Activated CD4-positive, alpha-beta memory T cell treated with anti-CD3 and anti-CD28 coated beads for 36 hours (primary cell): ENCODE measurements at regions of chr19 and their contacts with region 1.

Region 1: DNA sequence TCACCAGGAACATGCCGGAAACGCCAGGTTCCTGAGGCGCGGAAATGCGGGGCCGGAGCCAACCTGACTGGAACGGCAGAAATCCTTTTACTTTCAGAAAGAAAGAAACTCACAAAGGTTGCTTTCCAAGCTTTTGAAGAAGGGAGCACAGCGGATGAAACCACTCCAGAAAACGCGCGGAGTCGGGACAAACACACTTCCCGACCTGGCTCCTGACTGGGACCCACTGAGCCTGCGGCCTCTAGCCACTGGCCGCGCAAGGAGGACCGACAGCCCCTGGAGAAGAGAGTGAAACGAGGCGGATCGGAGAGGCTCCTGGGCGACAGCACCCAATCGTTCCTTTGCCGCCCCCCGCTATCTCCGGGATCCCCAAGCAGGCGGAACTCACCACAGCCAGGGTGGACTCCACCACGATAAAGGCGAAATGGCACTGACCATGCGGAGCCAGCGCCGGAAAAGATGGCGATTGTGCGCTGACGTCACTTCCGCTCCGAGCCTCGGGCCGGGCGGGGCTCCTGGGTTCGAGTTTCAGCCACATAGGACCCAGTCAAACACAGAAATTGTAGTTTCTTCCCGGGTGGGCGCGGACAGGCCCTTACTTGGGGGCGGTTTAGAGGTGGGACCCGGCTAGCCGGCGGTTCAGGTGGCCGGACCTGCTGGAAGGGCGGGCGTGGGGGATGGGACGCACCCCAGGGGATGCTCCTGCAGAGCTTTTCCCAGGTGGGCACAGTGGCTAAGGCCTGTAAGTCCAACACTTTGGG is at the start of gene ZNF121:
- DNase-seq: peak; percentile 90
- H3K4me3 Mint-ChIP-seq: peak within 1 kb of the TSS; percentile 93
- H3K27ac Mint-ChIP-seq: peak within 1 kb of the TSS; percentile 93
- H3K4me1 Mint-ChIP-seq: peaks cover 31% of the 10 kb centered on the region
- H3K27me3 Mint-ChIP-seq: peaks cover 6% of the 10 kb centered on the region
- total RNA-seq, gene ZNF121: 61.1 to 62.2 TPM

Region 2: GRCh38 chr19:9205501-9206113 is 378.6 kb before region 1 on chr19:
- CTCF ChIA-PET with region 1: no interaction called
- POLR2A ChIA-PET with region 1: no interaction called
- intact Hi-C with region 1: loop called (anchors 2 kb)
- DNase-seq: peak; percentile 76
- H3K4me3 Mint-ChIP-seq: peak overlapping the region; percentile 23
- H3K27ac Mint-ChIP-seq: no peak overlapping the region
- H3K4me1 Mint-ChIP-seq: peaks cover 2% of the 10 kb centered on the region
- H3K27me3 Mint-ChIP-seq: peaks cover 4% of the 10 kb centered on the region

Region 3: DNA sequence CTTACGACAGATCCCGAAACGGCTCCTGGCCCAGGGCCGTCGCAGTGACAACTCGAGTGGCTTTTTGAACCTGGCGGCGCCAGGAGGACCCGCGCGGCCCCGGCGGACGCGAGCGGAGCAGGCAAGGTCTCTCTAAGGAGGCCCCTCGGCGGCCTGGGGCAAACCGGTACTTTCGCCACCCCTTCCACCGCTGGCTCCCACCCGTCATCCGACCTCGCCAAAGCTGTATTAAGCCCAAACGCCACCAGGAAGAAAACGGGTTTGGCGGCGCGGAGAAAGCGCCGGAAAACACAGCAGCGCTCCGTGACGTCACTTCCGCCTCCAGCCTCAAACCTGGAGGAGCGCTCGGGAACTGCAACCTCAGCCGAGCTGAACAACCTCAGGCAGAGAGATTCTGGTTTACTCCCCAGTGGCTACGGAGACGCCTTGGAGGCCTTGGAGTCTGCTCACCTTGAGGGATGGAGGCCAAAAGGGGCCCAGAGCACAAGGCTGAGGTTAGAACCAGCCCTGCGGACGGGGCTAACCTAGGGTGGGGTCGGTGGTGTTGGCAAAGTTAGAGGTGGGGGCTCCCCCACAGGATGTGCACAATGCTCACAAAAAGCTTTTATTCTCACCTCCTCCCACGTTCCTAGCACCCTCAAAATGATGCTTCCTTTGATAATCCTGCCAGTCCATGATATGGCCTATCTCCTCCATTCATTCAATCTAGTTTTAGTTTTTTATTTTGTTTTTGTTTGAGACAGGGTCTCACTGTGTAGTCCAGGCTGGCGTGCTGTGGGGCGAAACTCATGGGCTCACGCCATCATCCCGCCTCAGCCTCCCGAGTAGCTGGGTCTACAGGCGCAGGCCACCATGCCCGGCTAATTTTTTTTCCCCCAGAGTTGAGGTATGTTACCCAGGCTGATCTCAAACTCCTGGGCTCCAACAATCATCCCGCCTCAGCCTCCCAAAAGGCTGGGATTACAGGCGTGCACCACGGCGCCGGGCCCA is 148.7 kb before region 1 on chr19 and contains the start of gene ZNF266:
- CTCF ChIA-PET with region 1: interaction called, 3 read pairs
- POLR2A ChIA-PET with region 1: interaction called, 7 read pairs
- intact Hi-C with region 1: loop called (anchors 5 kb)
- DNase-seq: peak; percentile 96
- H3K4me3 Mint-ChIP-seq: peak within 1 kb of the TSS; percentile 94
- H3K27ac Mint-ChIP-seq: peak within 1 kb of the TSS; percentile 98
- H3K4me1 Mint-ChIP-seq: peaks cover 33% of the 10 kb centered on the region
- H3K27me3 Mint-ChIP-seq: no peaks in the 10 kb centered on the region
- total RNA-seq, gene ZNF266: 20.0 to 23.4 TPM

Region 4: DNA sequence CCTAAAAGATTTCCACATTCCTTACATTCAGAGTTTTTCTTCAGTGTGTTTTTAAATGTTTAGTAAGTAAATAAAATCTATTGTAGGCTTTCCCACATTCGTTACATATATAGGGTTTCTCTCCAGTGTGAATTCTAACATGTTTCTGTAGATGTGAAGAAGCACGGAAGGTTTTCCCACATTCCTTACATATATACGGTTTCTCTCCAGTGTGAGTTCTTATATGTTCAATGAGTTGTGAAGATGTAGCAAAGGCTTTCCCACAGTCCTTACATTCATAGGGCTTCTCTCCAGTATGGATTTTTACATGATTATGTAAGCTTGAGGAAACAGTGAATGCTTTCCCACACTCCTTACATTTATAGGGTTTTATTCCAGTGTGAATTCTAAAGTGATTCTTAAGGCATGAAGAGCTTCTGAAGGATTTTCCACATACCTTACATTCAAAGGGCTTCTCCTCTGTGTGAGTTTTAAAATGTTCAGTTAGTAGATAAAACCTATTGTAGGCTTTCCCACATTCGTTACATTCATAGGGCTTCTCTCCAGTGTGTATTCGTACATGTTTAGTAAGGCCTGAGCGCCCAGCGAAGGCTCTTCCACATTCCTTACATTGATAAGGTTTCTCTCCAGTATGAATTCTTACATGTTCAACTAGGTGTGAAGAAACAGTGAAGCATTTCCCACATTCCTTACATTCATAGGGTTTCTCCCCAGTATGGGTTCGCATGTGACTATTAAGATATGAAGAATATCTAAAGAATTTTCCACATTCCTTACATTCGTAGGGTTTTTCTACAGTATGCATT is 18.1 kb before region 1 on chr19:
- CTCF ChIA-PET with region 1: no interaction called
- POLR2A ChIA-PET with region 1: no interaction called
- intact Hi-C with region 1: no loop called
- DNase-seq: no peak
- H3K4me3 Mint-ChIP-seq: no peak overlapping the region
- H3K27ac Mint-ChIP-seq: peak overlapping the region; percentile 36
- H3K4me1 Mint-ChIP-seq: no peaks in the 10 kb centered on the region
- H3K27me3 Mint-ChIP-seq: no peaks in the 10 kb centered on the region

Region 5: DNA sequence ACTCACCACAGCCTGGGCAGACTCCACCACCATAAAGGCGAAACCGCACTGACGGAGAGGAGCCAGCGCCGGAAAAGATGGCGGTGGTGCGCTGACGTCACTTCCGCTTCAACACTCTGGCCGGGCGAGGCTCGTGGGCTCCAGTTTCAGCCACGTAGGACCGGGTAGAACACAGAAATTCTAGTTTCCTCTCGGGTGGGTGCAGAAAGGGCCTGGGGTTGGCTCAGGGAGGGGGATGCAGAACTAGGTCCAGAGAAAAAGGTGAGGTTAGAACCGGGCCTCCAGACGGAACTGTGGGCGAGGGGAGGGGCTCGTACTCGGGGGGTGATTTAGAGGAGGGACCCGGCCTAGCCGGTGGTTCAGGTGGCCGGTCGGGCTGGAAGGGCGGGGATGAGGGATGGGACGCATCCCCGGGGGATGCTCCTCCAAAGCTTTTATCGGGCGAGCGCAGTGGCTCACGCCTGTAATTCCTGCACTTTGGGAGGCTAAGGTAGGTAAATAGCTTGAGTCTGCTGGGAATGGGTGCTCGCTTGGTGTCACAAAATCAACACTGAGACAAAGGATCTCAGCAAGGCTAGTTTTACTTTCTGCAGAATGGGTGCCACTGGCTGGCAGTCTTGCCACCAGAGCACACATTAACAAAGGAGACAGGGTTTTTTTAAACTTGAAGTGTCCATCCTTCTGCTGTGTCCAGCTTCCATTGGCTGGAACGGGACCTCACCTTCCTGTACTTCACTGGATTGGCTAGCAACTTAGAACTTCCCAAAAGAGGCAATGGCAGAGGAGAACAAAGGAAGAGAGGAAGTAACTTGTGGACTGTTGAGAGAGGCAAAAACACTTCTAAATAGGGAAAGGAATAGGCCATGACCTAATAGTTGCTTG is 37.1 kb after region 1 on chr19 and contains the start of gene ZNF561:
- CTCF ChIA-PET with region 1: interaction called, 5 read pairs
- POLR2A ChIA-PET with region 1: interaction called, 5 read pairs
- intact Hi-C with region 1: loop called (anchors 2 kb)
- DNase-seq: peak; percentile 91
- H3K4me3 Mint-ChIP-seq: peak within 1 kb of the TSS; percentile 92
- H3K27ac Mint-ChIP-seq: peak within 1 kb of the TSS; percentile 99
- H3K4me1 Mint-ChIP-seq: peaks cover 22% of the 10 kb centered on the region
- H3K27me3 Mint-ChIP-seq: no peaks in the 10 kb centered on the region
- total RNA-seq, gene ZNF561: 24.7 to 25.5 TPM

Region 6: DNA sequence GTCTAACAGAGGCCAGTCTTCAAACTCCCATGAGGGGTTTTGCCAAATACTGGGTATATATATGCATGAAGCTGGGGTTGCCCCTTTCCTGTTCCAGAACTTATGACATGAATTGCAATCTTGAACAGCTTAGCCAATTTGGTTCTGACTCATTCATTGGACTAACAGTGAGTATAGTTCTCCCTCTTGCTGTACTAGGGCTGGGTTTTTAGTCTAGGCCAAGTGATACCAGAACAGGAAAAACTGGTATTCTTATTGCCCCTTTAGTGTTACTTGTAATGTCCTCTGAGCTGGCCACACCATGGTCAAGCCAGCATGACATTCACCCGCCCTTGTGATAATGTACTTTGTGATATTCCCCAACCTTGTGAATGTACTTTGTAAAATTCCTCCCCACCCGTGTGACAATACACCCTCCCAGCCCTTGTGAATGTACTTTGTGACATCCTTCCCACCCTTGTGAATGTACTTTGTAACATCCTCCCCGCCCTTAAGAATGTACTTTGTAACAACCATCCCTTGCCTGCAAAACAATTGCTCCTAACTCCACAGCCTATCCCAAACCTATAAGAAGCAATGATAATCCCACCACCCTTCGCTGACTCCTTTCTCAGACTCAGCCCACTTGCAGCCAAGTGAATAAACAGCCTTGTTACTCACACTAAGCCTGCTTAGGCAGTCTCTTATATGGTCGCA is 157.4 kb after region 1 on chr19:
- CTCF ChIA-PET with region 1: no interaction called
- POLR2A ChIA-PET with region 1: no interaction called
- intact Hi-C with region 1: no loop called
- DNase-seq: no peak
- H3K4me3 Mint-ChIP-seq: no peak overlapping the region
- H3K27ac Mint-ChIP-seq: no peak overlapping the region
- H3K4me1 Mint-ChIP-seq: no peaks in the 10 kb centered on the region
- H3K27me3 Mint-ChIP-seq: no peaks in the 10 kb centered on the region